GM10248 (cell line): ENCODE measurements at regions of chr11 and their contacts with region 1.

Region 1: GRCh38 chr11:86608251-86608799 is 64.1 kb downstream of the ME3 start:
- DNase-seq: peak; percentile 46
- CTCF ChIP-seq: peak; percentile 89

Region 2: DNA sequence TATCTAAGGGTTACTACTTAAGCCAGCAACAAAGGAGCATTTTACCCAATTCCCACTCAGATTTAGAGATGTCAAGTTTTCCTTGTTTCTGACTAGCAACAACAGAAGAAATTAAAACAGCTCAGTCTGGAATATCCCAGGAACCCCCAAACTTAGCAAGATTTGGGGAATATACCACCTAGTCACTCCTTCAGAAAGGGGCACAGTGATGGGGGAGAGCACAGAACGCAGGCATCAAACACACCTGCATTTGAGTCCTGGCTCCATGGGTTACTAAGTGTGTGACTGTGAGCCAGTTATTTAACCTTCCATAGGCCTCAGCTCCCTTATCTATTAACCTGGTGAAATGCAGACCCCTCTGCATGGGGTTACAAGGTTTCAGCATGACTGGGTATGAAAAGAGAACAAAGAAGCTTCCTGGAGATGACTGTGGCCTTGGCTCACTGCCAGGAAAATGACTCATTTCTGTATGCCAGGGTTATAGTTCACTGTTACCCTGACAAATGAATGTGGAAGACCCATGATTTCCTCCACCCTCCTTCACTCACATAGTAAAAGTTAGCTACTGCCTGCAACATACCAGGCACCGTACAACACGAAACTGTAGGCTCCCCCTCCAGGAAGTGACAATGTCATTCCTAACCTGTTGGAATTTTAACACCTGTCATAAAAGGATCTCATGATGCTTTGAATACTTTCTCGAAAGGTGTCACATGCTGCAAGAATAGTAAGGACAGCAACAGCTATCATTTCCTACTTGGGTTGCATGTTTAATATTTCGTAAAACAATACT is 15.5 kb before region 1 on chr11:
- CTCF ChIA-PET with region 1: interaction called, 22 read pairs
- POLR2A ChIA-PET with region 1: no interaction called
- DNase-seq: peak; percentile 68
- CTCF ChIP-seq: no peak

Region 3: DNA sequence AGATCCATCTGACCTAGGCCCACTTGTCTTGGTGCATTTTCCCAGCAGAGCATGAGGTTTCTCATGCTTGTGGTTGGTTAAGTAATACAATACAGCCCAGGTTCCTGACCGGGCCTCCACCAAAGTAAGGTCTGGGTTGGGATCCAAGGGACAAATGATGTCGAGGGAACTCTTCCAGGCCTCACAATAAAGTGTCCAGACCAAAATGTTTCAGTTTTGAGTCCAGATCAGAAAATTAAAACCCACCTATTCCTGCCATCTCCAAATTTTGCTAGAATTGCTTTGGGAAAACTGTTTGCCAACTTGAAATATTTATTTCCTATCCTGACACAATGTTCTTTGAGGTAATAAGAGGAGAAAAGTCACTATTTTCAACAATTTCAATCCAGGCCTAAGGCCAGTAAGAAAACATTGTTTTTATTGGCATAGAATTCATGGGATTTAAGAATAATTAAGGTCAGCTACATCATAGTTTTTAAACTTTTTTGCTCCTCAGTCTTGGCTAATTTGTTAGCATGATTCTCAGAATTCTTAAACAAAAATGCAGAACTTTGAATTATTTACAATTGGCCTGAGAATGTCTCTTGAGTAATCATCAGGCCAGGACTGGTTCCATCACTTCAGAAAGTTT is 12.7 kb after region 1 on chr11:
- CTCF ChIA-PET with region 1: interaction called, 16 read pairs
- POLR2A ChIA-PET with region 1: no interaction called
- DNase-seq: no peak
- CTCF ChIP-seq: no peak